CD4-positive, alpha-beta T cell (primary cell): ENCODE measurements at regions of chr10 and their contacts with region 1.

Region 1: DNA sequence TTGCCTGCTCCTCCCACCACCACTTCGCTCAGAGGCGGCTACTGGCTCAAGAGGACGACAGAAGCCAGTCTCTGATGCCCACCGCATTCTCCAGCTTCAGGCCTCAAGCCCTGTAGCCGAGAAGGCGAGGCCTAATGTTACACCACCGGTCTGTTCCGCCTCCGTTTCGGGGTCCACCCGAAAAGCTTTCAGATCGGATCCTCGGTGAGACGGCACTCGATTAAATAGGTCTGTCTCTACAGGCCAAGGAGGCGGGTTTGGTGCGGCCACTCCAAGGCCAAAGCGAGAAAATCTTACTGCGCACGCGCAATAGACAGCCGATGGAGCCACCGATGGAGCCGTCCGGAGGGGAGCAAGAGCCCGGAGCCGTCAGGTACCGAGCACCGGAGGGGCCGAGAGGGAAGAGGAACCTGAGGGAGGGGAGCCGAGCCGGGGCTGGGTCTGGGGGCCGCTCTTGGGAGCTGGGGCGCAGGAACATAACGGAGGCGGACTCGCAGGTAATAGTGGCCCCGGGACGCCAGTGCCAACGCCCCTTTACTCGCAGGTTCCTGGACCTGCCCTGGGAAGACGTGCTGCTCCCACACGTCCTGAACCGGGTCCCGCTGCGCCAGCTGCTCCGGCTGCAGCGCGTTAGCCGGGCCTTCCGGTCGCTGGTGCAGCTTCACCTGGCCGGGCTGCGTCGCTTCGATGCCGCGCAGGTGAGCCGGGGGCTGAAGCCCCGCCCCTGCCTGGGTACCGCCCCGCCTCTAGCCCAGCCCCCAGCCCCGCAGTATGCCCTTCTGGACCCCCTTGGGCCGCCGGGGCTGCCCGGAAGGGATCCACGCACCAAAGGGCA is at the start of gene FBXL15:
- DNase-seq: peak; percentile 85 to 97 (median 94)
- ATAC-seq: peak; percentile 76
- H3K4me3 ChIP-seq: peak within 1 kb of the TSS; percentile 83
- H3K4me3 Mint-ChIP-seq: peak within 1 kb of the TSS; percentile 99
- H3K27ac ChIP-seq: peak within 1 kb of the TSS; percentile 65 to 82
- H3K27ac Mint-ChIP-seq: peak within 1 kb of the TSS; percentile 97
- H3K4me1 ChIP-seq: peaks cover 47% of the 10 kb centered on the region
- H3K4me1 Mint-ChIP-seq: peaks cover 34% of the 10 kb centered on the region
- H3K27me3 ChIP-seq: peaks cover 16 to 22% of the 10 kb centered on the region in 2 experiments
- H3K27me3 Mint-ChIP-seq: peaks cover 24% of the 10 kb centered on the region
- CTCF ChIP-seq: no peak
- total RNA-seq, gene FBXL15: 10.2 to 10.4 TPM

Region 2: DNA sequence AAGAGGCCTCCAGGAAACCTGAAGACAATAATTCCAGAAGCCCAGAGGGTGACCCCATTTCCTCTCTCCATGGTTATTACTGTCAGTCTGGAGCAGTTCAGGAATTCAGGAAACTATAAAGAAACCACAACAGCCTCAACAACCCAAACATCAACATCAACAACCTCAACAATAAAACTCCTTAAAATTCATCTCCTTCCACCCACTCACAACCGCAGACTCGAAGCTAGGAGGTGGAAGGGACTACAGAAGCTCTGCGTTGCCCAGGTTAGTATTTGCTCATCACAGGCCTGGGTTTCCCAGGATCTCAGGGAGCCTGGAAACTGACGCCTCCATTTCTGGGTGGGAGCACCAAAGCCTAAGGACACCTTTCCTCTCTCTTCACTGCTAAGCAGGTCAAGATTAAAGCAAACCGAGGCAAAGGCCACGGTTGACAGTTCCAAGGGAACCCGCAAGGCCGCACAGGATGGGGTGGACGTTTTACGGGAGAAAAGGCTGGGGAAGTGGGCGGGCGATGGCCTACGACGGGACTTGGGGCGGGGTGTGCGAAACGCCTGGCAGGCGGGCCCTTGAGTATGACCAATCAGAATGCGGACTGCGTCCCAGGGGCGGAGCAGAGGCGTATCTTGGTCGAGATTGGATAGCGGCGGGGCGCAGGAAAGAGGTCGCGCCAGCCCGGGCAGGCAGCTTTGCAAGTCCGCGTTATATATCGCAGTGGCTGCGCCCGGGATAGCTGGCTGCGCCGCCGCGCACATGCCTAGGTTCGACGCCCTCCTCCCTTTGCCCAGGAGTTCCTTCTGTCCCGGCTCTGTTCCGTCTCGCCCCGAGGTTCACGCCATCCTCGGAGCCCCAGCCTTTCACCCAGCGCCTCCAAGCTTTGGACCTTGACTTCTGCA is 195.1 kb before region 1 on chr10 and contains the start of gene ELOVL3:
- CTCF ChIA-PET with region 1: interaction called, 17 read pairs
- POLR2A ChIA-PET with region 1: interaction called, 5 read pairs
- intact Hi-C with region 1: no loop called
- DNase-seq: peak; percentile 64 to 93 (median 80)
- ATAC-seq: peak; percentile 92
- H3K4me3 ChIP-seq: peak within 1 kb of the TSS; percentile 44
- H3K4me3 Mint-ChIP-seq: peak within 1 kb of the TSS; percentile 68
- H3K27ac ChIP-seq: no peak within 1 kb of the TSS
- H3K27ac Mint-ChIP-seq: no peak within 1 kb of the TSS
- H3K4me1 ChIP-seq: peaks cover 28% of the 10 kb centered on the region
- H3K4me1 Mint-ChIP-seq: peaks cover 18% of the 10 kb centered on the region
- H3K27me3 ChIP-seq: peaks cover 22 to 31% of the 10 kb centered on the region in 2 experiments
- H3K27me3 Mint-ChIP-seq: peaks cover 69% of the 10 kb centered on the region
- CTCF ChIP-seq: no peak
- total RNA-seq, gene ELOVL3: not detected

Region 3: DNA sequence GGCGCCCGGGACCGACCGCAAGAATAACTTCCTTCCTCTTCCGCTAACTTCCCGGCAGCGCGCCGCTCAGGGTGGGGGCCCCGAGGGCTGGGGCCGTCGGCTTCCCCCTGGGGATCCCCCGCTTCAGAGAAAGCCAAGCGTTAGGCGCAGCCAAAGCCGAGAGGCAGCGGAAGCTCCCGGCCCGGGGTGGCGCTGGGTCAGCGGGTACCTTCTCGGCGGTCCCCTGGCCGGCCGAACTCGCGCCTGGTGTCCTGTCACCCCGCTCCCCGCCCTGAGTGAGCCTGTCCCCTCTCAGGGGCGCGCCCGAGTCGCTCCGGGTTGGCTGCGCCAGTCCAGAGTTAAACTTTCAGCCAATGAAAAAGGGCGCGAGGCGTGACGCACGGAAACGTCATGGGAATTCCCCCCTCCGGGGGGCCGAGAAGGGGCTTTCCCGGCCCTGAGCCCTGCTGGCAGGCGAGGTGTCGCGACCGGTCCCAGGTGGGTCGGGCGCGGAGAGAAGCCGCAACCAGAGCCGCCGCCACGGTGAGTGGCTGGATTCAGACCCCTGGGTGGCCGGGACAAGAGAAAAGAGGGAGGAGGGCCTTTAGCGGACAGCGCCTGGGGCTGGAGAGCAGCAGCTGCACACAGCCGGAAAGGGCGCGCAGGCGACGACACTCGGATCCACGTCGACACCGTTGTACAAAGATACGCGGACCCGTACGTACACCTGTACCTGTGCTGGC is 26.8 kb before region 1 on chr10:
- CTCF ChIA-PET with region 1: interaction called, 26 read pairs
- POLR2A ChIA-PET with region 1: interaction called, 71 read pairs
- intact Hi-C with region 1: loop called (anchors 2 kb)
- DNase-seq: peak; percentile 95 to 99 (median 98)
- ATAC-seq: peak; percentile 72
- H3K4me3 ChIP-seq: peak overlapping the region; percentile 64
- H3K4me3 Mint-ChIP-seq: peak overlapping the region; percentile 92
- H3K27ac ChIP-seq: peak overlapping the region; percentile 97 to 100
- H3K27ac Mint-ChIP-seq: peak overlapping the region; percentile 100
- H3K4me1 ChIP-seq: peaks cover 57% of the 10 kb centered on the region
- H3K4me1 Mint-ChIP-seq: peaks cover 47% of the 10 kb centered on the region
- H3K27me3 ChIP-seq: no peaks in the 10 kb centered on the region
- H3K27me3 Mint-ChIP-seq: no peaks in the 10 kb centered on the region
- CTCF ChIP-seq: peak; percentile 12

Region 4: GRCh38 chr10:102408728-102409603 is 12.1 kb before region 1 on chr10:
- CTCF ChIA-PET with region 1: interaction called, 7 read pairs
- POLR2A ChIA-PET with region 1: interaction called, 48 read pairs
- intact Hi-C with region 1: no loop called
- DNase-seq: peak; percentile 57 to 89 (median 74)
- ATAC-seq: peak; percentile 69
- H3K4me3 ChIP-seq: peak overlapping the region; percentile 54
- H3K4me3 Mint-ChIP-seq: peak overlapping the region; percentile 87
- H3K27ac ChIP-seq: peak overlapping the region in 1 of 2 donors; percentile 0
- H3K27ac Mint-ChIP-seq: peak overlapping the region; percentile 85
- H3K4me1 ChIP-seq: peaks cover 53% of the 10 kb centered on the region
- H3K4me1 Mint-ChIP-seq: peaks cover 56% of the 10 kb centered on the region
- H3K27me3 ChIP-seq: peaks cover 8 to 18% of the 10 kb centered on the region in 2 experiments
- H3K27me3 Mint-ChIP-seq: peaks cover 37% of the 10 kb centered on the region
- CTCF ChIP-seq: no peak

Region 5: GRCh38 chr10:102450194-102450938 is 29.3 kb after region 1 on chr10:
- CTCF ChIA-PET with region 1: interaction called, 7 read pairs
- POLR2A ChIA-PET with region 1: interaction called, 94 read pairs
- intact Hi-C with region 1: loop called in 1 of 2 experiments (anchors 1 kb)
- DNase-seq: peak; percentile 78 to 98 (median 88)
- ATAC-seq: peak; percentile 77
- H3K4me3 ChIP-seq: peak overlapping the region; percentile 83
- H3K4me3 Mint-ChIP-seq: peak overlapping the region; percentile 94
- H3K27ac ChIP-seq: peak overlapping the region; percentile 79 to 80
- H3K27ac Mint-ChIP-seq: peak overlapping the region; percentile 78
- H3K4me1 ChIP-seq: peaks cover 41% of the 10 kb centered on the region
- H3K4me1 Mint-ChIP-seq: peaks cover 21% of the 10 kb centered on the region
- H3K27me3 ChIP-seq: no peaks in the 10 kb centered on the region
- H3K27me3 Mint-ChIP-seq: no peaks in the 10 kb centered on the region
- CTCF ChIP-seq: no peak

Region 6: GRCh38 chr10:102473445-102474331 is 52.7 kb after region 1 on chr10:
- CTCF ChIA-PET with region 1: interaction called, 21 read pairs
- POLR2A ChIA-PET with region 1: interaction called, 6 read pairs
- intact Hi-C with region 1: loop called in 1 of 2 experiments (anchors 2 kb)
- DNase-seq: peak in 9 of 14 experiments; percentile 10 to 56 (median 46)
- ATAC-seq: peak; percentile 80
- H3K4me3 ChIP-seq: no peak overlapping the region
- H3K4me3 Mint-ChIP-seq: peak overlapping the region; percentile 22
- H3K27ac ChIP-seq: peak overlapping the region in 1 of 2 donors; percentile 17
- H3K27ac Mint-ChIP-seq: peak overlapping the region; percentile 81
- H3K4me1 ChIP-seq: peaks cover 25% of the 10 kb centered on the region
- H3K4me1 Mint-ChIP-seq: peaks cover 24% of the 10 kb centered on the region
- H3K27me3 ChIP-seq: no peaks in the 10 kb centered on the region
- H3K27me3 Mint-ChIP-seq: no peaks in the 10 kb centered on the region
- CTCF ChIP-seq: no peak